ENCODE measurements at regions of chr14 and their contacts with region 1.

Region 1: DNA sequence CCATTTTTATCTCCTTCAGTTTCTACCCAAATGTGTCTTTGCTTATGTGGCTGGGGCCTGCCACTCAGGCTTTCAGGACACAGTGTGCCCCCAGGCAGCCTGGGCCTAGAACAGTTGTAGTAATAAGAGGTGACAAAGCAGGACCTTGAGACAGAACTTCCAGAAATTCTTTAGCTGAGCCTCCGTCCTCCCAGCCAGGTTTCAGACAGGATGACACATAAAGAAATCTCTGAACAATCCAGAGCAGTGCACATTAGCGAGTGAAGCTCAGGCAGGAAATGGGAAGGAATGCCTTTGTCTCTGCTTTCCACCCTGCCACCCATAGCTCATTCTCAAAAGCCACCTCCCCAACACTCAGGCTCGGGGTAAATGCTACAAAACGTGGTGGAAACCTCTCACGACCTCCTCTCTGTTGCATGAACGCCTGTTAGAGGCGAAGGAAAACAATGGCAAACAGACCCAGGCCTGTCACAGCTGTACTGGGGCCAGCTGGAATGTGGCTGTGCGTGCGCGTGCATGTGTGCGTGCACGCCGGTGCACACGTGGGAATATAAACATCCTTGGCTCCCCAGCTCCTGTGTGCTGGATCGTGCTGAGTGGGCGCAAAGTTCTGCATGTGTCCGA is 286.7 kb downstream of the ZFP36L1 start:
- DNase-seq: no peak
- ATAC-seq: no peak
- H3K4me3 Mint-ChIP-seq: peak overlapping the region; percentile 58 to 85 (median 78)
- H3K27ac Mint-ChIP-seq: peak overlapping the region; percentile 76 to 96 (median 93)
- H3K4me1 Mint-ChIP-seq: peaks cover 43 to 85% (median 79%) of the 10 kb centered on the region in 4 donors
- H3K27me3 Mint-ChIP-seq: no peaks in the 10 kb centered on the region

Region 2: GRCh38 chr14:68248481-68249255 is 257.5 kb before region 1 on chr14:
- POLR2A ChIA-PET with region 1: interaction called, 22 read pairs
- DNase-seq: peak in 6 of 10 donors; percentile 23 to 66 (median 46)
- ATAC-seq: peak; percentile 79 to 82
- H3K4me3 Mint-ChIP-seq: peak overlapping the region in 1 of 10 donors; percentile 49
- H3K27ac Mint-ChIP-seq: peak overlapping the region in 7 of 10 donors; percentile 9 to 68 (median 37)
- H3K4me1 Mint-ChIP-seq: peaks cover 12 to 54% (median 34%) of the 10 kb centered on the region in 4 donors
- H3K27me3 Mint-ChIP-seq: no peaks in the 10 kb centered on the region

Region 3: GRCh38 chr14:68377459-68377858 is 128.7 kb before region 1 on chr14:
- POLR2A ChIA-PET with region 1: interaction called, 14 read pairs
- DNase-seq: no peak
- ATAC-seq: peak in 1 of 2 donors; percentile 31
- H3K4me3 Mint-ChIP-seq: peak overlapping the region in 9 of 10 donors; percentile 20 to 71 (median 63)
- H3K27ac Mint-ChIP-seq: peak overlapping the region; percentile 61 to 92 (median 85)
- H3K4me1 Mint-ChIP-seq: peaks cover 46 to 77% (median 67%) of the 10 kb centered on the region in 4 donors
- H3K27me3 Mint-ChIP-seq: no peaks in the 10 kb centered on the region

Region 4: GRCh38 chr14:68495101-68496039 is 10.8 kb before region 1 on chr14:
- POLR2A ChIA-PET with region 1: interaction called, 77 read pairs
- DNase-seq: peak in 6 of 10 donors; percentile 24 to 69 (median 54)
- ATAC-seq: peak; percentile 86 to 95
- H3K4me3 Mint-ChIP-seq: peak overlapping the region; percentile 16 to 80 (median 69)
- H3K27ac Mint-ChIP-seq: peak overlapping the region; percentile 81 to 96 (median 88)
- H3K4me1 Mint-ChIP-seq: peaks cover 44 to 74% (median 65%) of the 10 kb centered on the region in 4 donors
- H3K27me3 Mint-ChIP-seq: no peaks in the 10 kb centered on the region

Region 5: DNA sequence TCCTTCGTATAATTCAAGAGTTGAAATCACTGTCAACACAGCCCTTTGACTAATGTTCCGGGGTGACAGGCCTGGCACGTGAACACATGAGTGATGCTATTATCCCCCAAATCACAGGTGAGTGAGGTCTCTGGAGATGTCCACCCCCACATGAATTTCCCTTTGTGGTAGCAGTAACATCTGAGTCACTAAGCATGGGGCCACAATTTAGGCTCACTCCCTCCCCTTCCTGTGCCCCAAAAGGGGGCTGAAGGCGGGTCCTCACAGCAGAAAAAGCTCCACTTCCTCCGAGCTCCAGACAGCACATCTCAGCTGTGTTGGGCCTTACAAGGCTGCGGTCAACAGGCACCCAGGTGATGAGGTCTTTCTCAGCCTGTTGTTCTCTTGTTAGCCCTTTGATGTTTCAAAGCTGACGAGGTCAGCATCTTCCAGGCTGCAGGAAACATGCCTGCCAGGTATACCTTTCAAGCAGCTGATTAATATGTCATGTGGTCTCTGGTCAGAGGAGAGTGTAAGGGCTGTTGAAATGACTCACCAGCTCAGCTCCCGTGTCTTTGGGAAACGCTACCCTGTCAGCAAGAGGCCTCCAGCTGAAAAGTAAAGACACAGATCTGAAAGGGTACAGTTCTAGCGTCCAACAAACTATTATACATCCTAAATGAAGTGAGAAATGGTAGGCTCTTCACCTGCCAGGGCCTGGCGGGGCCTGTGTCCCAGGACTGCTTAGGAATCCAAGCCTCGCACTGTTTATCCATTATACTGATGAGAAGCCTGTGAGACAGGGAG is 179.5 kb after region 1 on chr14:
- POLR2A ChIA-PET with region 1: interaction called, 24 read pairs
- DNase-seq: peak; percentile 39 to 93 (median 80)
- ATAC-seq: peak; percentile 86 to 88
- H3K4me3 Mint-ChIP-seq: peak overlapping the region in 9 of 10 donors; percentile 32 to 77 (median 72)
- H3K27ac Mint-ChIP-seq: peak overlapping the region; percentile 93 to 98 (median 96)
- H3K4me1 Mint-ChIP-seq: peaks cover 36 to 82% (median 70%) of the 10 kb centered on the region in 4 donors
- H3K27me3 Mint-ChIP-seq: no peaks in the 10 kb centered on the region

Region 6: DNA sequence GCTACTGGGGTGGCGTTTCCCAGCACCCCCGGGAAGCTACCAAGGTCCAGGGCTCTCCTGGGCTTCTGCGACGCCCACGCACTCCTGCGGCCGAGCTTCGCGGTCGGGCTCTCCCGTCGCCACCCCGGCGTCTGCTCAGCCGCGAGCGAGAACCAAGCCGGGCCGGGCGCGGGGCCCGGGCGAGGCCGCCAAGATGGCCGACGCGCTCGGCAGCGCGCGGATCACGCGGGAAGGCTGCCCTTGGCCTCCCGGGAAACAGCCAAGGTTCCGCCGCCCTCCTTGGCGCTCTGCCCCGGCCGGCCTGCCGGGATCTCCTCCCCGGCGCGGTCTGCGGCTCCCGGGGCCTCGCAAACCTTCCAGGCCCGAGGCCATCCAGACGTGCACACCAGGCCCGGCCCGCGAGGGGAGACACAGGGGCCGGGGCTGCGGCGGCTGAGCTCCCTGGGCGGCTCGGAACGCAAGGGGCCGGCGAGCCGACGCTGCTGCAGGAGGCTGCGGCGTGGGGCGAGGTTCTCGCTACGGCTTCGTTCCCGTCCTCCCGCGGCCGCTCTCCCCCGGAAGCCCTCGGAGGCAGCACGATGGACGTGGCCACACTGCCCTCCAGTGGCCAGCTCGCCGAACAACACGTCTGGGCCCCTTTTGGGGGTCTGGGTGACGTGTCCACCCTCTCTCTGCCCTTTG is 310.3 kb after region 1 on chr14:
- POLR2A ChIA-PET with region 1: interaction called, 54 read pairs
- DNase-seq: peak; percentile 80 to 94 (median 90)
- ATAC-seq: peak; percentile 79 to 81
- H3K4me3 Mint-ChIP-seq: peak overlapping the region; percentile 77 to 96 (median 87)
- H3K27ac Mint-ChIP-seq: peak overlapping the region; percentile 92 to 100 (median 97)
- H3K4me1 Mint-ChIP-seq: peaks cover 34 to 84% (median 69%) of the 10 kb centered on the region in 4 donors
- H3K27me3 Mint-ChIP-seq: no peaks in the 10 kb centered on the region